Naive thymus-derived CD4-positive, alpha-beta T cell (primary cell): ENCODE measurements at regions of chr4 and their contacts with region 1.

Region 1: DNA sequence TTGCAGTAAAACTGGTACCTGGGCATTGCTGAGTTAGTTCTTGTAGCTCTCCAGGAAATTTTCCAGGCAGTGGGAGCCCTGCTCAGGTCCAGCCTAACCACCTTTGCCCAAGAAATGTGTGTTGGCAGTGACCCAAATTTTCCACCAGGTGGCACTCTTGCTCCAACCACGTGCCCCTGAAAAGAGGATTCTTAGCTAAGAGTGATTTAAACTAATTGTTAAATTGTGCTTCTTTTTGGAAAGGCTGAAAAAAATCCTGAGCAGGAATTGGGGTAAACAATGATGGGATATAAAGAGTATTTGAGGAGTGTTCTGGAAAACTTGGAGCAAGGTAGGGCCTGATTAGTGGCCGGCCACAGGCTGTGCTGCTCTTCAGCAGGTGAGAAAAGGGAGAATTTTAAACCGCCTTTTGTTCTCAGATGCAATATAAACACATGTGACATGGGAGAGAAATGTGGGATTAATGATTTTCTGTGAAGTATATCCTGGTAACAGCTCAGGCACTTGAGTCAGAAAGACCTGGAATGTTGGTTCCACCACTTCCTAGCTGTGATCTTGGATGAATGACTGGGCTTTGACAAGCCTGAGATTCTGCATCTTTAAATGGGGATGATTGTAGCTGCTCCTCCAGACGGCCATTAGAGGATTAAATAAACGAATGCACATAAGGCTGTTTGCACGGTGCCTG is 219.6 kb downstream of the PTTG2 start:
- DNase-seq: peak; percentile 47 to 79 (median 69)
- ATAC-seq: peak; percentile 71
- H3K4me3 ChIP-seq: no peak overlapping the region
- H3K4me3 Mint-ChIP-seq: no peak overlapping the region
- H3K27ac ChIP-seq: no peak overlapping the region
- H3K27ac Mint-ChIP-seq: peak overlapping the region in 6 of 9 donors; percentile 2 to 55 (median 22)
- H3K4me1 ChIP-seq: peaks cover 17 to 21% of the 10 kb centered on the region in 2 donors
- H3K4me1 Mint-ChIP-seq: peaks cover 25 to 53% (median 46%) of the 10 kb centered on the region in 7 donors
- H3K27me3 ChIP-seq: no peaks in the 10 kb centered on the region
- H3K27me3 Mint-ChIP-seq: peaks cover 0 to 28% (median 0%) of the 10 kb centered on the region in 5 donors

Region 2: GRCh38 chr4:38069271-38069760 is 110.5 kb before region 1 on chr4:
- CTCF ChIA-PET with region 1: interaction called, 13 read pairs
- POLR2A ChIA-PET with region 1: no interaction called
- intact Hi-C with region 1: loop called (anchors 1 kb)
- DNase-seq: peak in 6 of 9 donors; percentile 16 to 53 (median 38)
- ATAC-seq: peak; percentile 86
- H3K4me3 ChIP-seq: no peak overlapping the region
- H3K4me3 Mint-ChIP-seq: no peak overlapping the region
- H3K27ac ChIP-seq: no peak overlapping the region
- H3K27ac Mint-ChIP-seq: peak overlapping the region in 1 of 9 donors; percentile 12
- H3K4me1 ChIP-seq: no peaks in the 10 kb centered on the region
- H3K4me1 Mint-ChIP-seq: peaks cover 9 to 29% (median 18%) of the 10 kb centered on the region in 7 donors
- H3K27me3 ChIP-seq: no peaks in the 10 kb centered on the region
- H3K27me3 Mint-ChIP-seq: no peaks in the 10 kb centered on the region

Region 3: GRCh38 chr4:38310446-38311043 is 130.7 kb after region 1 on chr4:
- CTCF ChIA-PET with region 1: interaction called, 14 read pairs
- POLR2A ChIA-PET with region 1: interaction called, 4 read pairs
- intact Hi-C with region 1: loop called in 1 of 2 experiments (anchors 2 kb)
- DNase-seq: peak in 8 of 9 donors; percentile 70 to 84 (median 79)
- ATAC-seq: peak; percentile 96
- H3K4me3 ChIP-seq: peak overlapping the region; percentile 12
- H3K4me3 Mint-ChIP-seq: peak overlapping the region; percentile 37 to 80 (median 70)
- H3K27ac ChIP-seq: peak overlapping the region; percentile 44
- H3K27ac Mint-ChIP-seq: peak overlapping the region; percentile 65 to 96 (median 85)
- H3K4me1 ChIP-seq: peaks cover 29 to 34% of the 10 kb centered on the region in 2 donors
- H3K4me1 Mint-ChIP-seq: peaks cover 24 to 70% (median 60%) of the 10 kb centered on the region in 7 donors
- H3K27me3 ChIP-seq: no peaks in the 10 kb centered on the region
- H3K27me3 Mint-ChIP-seq: peaks cover 0 to 45% (median 0%) of the 10 kb centered on the region in 5 donors

Region 4: DNA sequence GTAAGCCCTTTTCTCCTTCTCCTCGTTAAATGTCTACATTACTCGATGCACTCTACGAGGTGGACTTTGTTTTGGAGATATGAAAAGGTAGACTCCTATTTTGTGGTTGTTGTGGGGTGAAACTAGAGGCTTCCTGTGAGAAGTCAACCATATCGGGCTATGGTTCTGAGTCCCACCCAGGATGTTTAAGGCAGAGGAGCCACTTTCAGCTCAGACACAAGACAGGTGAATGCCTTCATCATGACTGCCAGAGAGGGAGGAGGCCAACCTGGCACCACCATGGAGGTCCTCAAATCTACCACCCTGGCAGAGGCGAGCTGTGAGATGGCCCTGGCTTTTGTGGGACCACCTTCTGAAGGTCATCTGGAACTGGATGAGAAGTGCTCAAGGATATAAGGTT is 329.7 kb after region 1 on chr4:
- CTCF ChIA-PET with region 1: interaction called, 4 read pairs
- POLR2A ChIA-PET with region 1: no interaction called
- intact Hi-C with region 1: loop called in 1 of 2 experiments (anchors 5 kb)
- DNase-seq: peak in 8 of 9 donors; percentile 30 to 83 (median 76)
- ATAC-seq: peak; percentile 94
- H3K4me3 ChIP-seq: peak overlapping the region; percentile 61
- H3K4me3 Mint-ChIP-seq: peak overlapping the region; percentile 70 to 94 (median 89)
- H3K27ac ChIP-seq: peak overlapping the region; percentile 74
- H3K27ac Mint-ChIP-seq: peak overlapping the region; percentile 71 to 97 (median 89)
- H3K4me1 ChIP-seq: peaks cover 60 to 64% of the 10 kb centered on the region in 2 donors
- H3K4me1 Mint-ChIP-seq: peaks cover 40 to 94% (median 90%) of the 10 kb centered on the region in 7 donors
- H3K27me3 ChIP-seq: no peaks in the 10 kb centered on the region
- H3K27me3 Mint-ChIP-seq: peaks cover 0 to 51% (median 0%) of the 10 kb centered on the region in 5 donors

Region 5: GRCh38 chr4:38730830-38731646 is 551.2 kb after region 1 on chr4:
- CTCF ChIA-PET with region 1: interaction called, 130 read pairs
- POLR2A ChIA-PET with region 1: interaction called, 7 read pairs
- intact Hi-C with region 1: loop called (anchors 1 kb)
- DNase-seq: peak; percentile 63 to 86 (median 77)
- ATAC-seq: peak; percentile 88
- H3K4me3 ChIP-seq: no peak overlapping the region
- H3K4me3 Mint-ChIP-seq: no peak overlapping the region
- H3K27ac ChIP-seq: no peak overlapping the region
- H3K27ac Mint-ChIP-seq: peak overlapping the region in 2 of 9 donors; percentile 25 to 31
- H3K4me1 ChIP-seq: peaks cover 0 to 7% of the 10 kb centered on the region in 2 donors
- H3K4me1 Mint-ChIP-seq: peaks cover 7 to 20% (median 16%) of the 10 kb centered on the region in 7 donors
- H3K27me3 ChIP-seq: no peaks in the 10 kb centered on the region
- H3K27me3 Mint-ChIP-seq: peaks cover 0 to 12% (median 0%) of the 10 kb centered on the region in 5 donors

Region 6: DNA sequence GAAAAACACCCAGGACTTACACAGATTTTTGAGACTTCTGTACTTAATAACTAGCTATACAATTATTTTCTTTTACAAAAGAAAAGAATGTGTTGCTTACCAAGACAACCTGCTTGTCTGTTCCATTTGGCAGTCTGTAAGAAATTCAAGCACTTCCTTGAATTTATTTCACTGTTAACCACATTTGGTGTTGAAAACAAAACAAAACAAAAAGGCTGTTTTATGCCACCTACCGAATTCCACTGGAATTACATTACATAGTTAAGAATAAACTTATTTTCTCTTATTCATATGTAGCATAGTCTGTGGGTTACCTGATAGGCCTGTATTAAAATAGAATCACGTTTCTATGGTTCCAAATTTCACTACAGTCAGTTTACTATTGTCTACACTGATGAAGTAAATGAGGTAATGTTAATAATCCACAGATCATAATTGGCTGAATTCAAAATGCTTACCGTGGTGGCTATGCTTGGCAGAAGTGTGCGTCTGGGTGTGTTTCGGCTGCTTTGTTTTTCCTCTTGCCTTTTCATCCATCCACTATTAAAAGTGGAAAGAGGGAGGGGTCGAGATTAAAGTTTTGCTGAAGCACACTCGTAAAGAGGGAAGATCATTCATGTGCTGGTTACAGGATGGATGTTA is 624.9 kb after region 1 on chr4 and contains the start of gene TLR1:
- CTCF ChIA-PET with region 1: no interaction called
- POLR2A ChIA-PET with region 1: no interaction called
- intact Hi-C with region 1: loop called in 1 of 2 experiments (anchors 1 kb)
- DNase-seq: peak in 7 of 9 donors; percentile 50 to 76 (median 65)
- ATAC-seq: peak; percentile 88
- H3K4me3 ChIP-seq: peak within 1 kb of the TSS; percentile 51
- H3K4me3 Mint-ChIP-seq: peak within 1 kb of the TSS; percentile 87 to 95 (median 90)
- H3K27ac ChIP-seq: peak within 1 kb of the TSS; percentile 61
- H3K27ac Mint-ChIP-seq: peak within 1 kb of the TSS; percentile 87 to 99 (median 94)
- H3K4me1 ChIP-seq: peaks cover 8 to 12% of the 10 kb centered on the region in 2 donors
- H3K4me1 Mint-ChIP-seq: peaks cover 27 to 46% (median 39%) of the 10 kb centered on the region in 7 donors
- H3K27me3 ChIP-seq: no peaks in the 10 kb centered on the region
- H3K27me3 Mint-ChIP-seq: peaks cover 0 to 2% (median 0%) of the 10 kb centered on the region in 5 donors
- total RNA-seq, gene TLR1: 11.8 to 41.9 (median 17.7) TPM